Activated CD8-positive, alpha-beta memory T cell treated with anti-CD3 and anti-CD28 coated beads, Interleukin-2, amount 10 ng/mL, durations not matched to agents 7 days and 5 days (primary cell): ENCODE measurements at regions of chr12 and their contacts with region 1.

Region 1: DNA sequence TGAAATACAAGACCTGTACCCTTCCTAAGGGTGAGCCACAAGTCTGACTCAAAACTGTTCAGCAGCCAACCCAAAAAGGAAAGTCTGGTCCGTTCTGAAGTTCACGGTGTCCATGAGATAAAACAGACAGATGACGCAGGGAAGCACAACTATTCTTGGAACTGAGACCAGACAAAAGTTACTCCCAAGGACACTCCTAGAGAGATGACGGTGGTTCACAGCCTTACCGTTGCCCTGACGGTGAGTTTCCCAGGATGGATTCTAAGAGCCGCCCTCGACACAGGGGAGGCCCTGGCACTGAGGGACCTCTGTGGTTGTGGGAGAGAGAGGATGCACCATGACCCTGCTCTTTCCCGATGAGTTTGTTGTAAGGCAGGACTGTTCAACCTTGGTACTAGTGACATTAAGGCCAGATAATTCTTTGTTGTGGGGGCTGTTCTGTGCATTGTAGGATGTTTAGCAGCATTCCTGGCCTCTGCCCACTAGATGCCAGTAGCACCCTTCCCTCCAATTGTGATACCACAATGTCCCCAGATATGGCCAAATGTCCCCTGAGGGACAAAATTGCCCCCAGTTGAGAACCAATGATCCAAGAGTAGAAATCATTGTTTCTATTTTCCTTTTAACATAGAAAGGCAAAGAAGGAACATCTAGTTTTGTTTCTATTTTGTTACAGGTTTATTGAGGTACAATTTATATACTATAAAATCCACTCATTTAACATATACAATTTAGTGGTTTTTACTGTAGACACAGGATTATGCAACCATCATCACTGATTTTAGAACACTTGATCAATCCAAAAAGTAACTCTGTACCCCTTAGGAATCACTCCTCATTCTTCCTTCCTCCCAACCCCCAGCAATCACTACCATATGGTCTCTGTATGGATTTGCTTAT is 23.0 kb downstream of the OR10P1 start:
- DNase-seq: no peak
- ATAC-seq: no peak
- H3K4me3 Mint-ChIP-seq: no peak overlapping the region
- H3K27ac Mint-ChIP-seq: no peak overlapping the region
- H3K4me1 Mint-ChIP-seq: no peaks in the 10 kb centered on the region
- H3K27me3 Mint-ChIP-seq: peaks cover 19% of the 10 kb centered on the region

Region 2: DNA sequence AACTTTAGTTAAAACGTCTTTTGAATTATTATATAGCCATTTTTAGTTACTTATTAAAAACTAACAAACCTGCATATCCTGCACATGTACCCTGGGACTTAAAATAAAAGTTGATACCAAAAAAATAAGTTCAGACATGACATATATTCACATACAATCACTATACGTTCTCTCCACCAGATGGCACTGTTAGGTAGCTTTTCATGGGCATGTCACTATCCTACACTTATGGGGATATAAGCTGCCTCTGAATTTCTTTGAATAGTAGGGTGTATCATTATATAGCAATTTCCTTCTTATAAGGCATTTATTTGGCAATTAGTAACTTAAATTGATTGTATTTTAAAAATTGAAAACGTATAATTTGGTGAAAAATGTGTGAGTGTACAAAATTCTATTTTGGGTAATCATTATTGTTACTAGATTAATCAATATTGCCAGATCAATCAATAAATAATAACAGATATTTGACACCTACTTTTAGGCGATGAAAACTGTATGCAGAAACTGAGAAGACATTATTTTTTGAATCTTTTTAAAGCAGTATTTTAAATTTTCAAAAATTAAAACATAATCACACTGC is 470.7 kb before region 1 on chr12:
- CTCF ChIA-PET with region 1: interaction called, 11 read pairs
- DNase-seq: peak; percentile 55
- ATAC-seq: peak; percentile 75
- H3K4me3 Mint-ChIP-seq: no peak overlapping the region
- H3K27ac Mint-ChIP-seq: no peak overlapping the region
- H3K4me1 Mint-ChIP-seq: no peaks in the 10 kb centered on the region
- H3K27me3 Mint-ChIP-seq: peaks cover 16% of the 10 kb centered on the region

Region 3: DNA sequence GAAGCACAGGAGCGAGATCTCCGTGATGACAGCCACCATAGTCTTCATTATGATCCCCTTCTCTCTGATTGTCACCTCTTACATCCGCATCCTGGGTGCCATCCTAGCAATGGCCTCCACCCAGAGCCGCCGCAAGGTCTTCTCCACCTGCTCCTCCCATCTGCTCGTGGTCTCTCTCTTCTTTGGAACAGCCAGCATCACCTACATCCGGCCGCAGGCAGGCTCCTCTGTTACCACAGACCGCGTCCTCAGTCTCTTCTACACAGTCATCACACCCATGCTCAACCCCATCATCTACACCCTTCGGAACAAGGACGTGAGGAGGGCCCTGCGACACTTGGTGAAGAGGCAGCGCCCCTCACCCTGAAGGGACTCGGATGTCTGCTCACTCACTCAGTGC is 22.3 kb before region 1 on chr12:
- CTCF ChIA-PET with region 1: interaction called, 94 read pairs
- DNase-seq: peak; percentile 75
- ATAC-seq: peak; percentile 79
- H3K4me3 Mint-ChIP-seq: peak overlapping the region; percentile 31
- H3K27ac Mint-ChIP-seq: peak overlapping the region; percentile 64
- H3K4me1 Mint-ChIP-seq: peaks cover 27% of the 10 kb centered on the region
- H3K27me3 Mint-ChIP-seq: peaks cover 9% of the 10 kb centered on the region

Region 4: GRCh38 chr12:55642669-55643068 is 17.1 kb before region 1 on chr12:
- CTCF ChIA-PET with region 1: interaction called, 94 read pairs
- DNase-seq: peak; percentile 61
- ATAC-seq: no peak
- H3K4me3 Mint-ChIP-seq: no peak overlapping the region
- H3K27ac Mint-ChIP-seq: no peak overlapping the region
- H3K4me1 Mint-ChIP-seq: peaks cover 31% of the 10 kb centered on the region
- H3K27me3 Mint-ChIP-seq: no peaks in the 10 kb centered on the region

Region 5: GRCh38 chr12:55715833-55716581 is 56.3 kb after region 1 on chr12 and contains the start of gene BLOC1S1:
- CTCF ChIA-PET with region 1: interaction called, 15 read pairs
- DNase-seq: peak; percentile 96
- ATAC-seq: peak; percentile 95
- H3K4me3 Mint-ChIP-seq: peak within 1 kb of the TSS; percentile 90
- H3K27ac Mint-ChIP-seq: peak within 1 kb of the TSS; percentile 90
- H3K4me1 Mint-ChIP-seq: peaks cover 49% of the 10 kb centered on the region
- H3K27me3 Mint-ChIP-seq: peaks cover 7% of the 10 kb centered on the region
- total RNA-seq, gene BLOC1S1: 151 to 152 TPM